ENCODE measurements at regions of chr13 and their contacts with region 1.

Region 1: GRCh38 chr13:102555917-102556553 is 40.8 kb upstream of the TPP2 start:
- DNase-seq: no peak
- ATAC-seq: peak; percentile 78
- H3K4me3 ChIP-seq: no peak overlapping the region
- H3K27ac ChIP-seq: no peak overlapping the region
- H3K4me1 ChIP-seq: no peaks in the 10 kb centered on the region
- H3K27me3 ChIP-seq: no peaks in the 10 kb centered on the region
- CTCF ChIP-seq: peak; percentile 34 to 52 (median 39); a peak in 4 of 6 replicates
- EP300 ChIP-seq: no peak
- POLR2A ChIP-seq: no peak
- RAD21 ChIP-seq: peak; percentile 70

Region 2: DNA sequence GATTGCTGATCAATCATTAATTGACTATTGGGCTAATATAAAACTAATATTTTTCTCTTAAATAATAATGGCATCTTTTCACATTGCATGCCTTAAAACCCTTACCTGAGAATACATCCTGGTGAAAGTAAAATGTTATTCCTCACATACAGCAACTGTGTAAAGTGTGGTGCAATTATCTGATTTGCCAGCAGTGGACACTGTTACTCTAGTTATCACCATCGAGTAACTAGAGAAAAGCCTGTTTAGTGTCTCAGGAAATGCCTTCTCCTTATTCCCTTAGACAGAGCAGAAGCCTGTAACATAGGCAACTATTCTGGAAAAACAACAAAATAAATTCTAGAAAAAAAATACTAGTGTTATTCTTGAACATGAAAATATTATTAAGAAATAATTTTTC is 614.0 kb before region 1 on chr13:
- CTCF ChIA-PET with region 1: interaction called, 14 read pairs
- POLR2A ChIA-PET with region 1: no interaction called
- RAD21 ChIA-PET with region 1: interaction called, 10 read pairs
- SMC1A ChIA-PET with region 1: interaction called, 4 read pairs
- in situ Hi-C with region 1: loop called (anchors 10 kb)
- intact Hi-C with region 1: no loop called
- DNase-seq: no peak
- ATAC-seq: peak; percentile 78
- H3K4me3 ChIP-seq: no peak overlapping the region
- H3K27ac ChIP-seq: no peak overlapping the region
- H3K4me1 ChIP-seq: no peaks in the 10 kb centered on the region
- H3K27me3 ChIP-seq: no peaks in the 10 kb centered on the region
- CTCF ChIP-seq: peak; percentile 62 to 63 (median 63)
- EP300 ChIP-seq: no peak
- POLR2A ChIP-seq: no peak
- RAD21 ChIP-seq: peak; percentile 72

Region 3: GRCh38 chr13:102141625-102142472 is 414.2 kb before region 1 on chr13:
- CTCF ChIA-PET with region 1: interaction called, 12 read pairs
- POLR2A ChIA-PET with region 1: no interaction called
- RAD21 ChIA-PET with region 1: interaction called, 10 read pairs
- SMC1A ChIA-PET with region 1: interaction called, 8 read pairs
- in situ Hi-C with region 1: no loop called
- intact Hi-C with region 1: loop called (anchors 2 kb)
- DNase-seq: no peak
- ATAC-seq: peak; percentile 45; the same call in 2 of the 3 replicates
- H3K4me3 ChIP-seq: no peak overlapping the region
- H3K27ac ChIP-seq: no peak overlapping the region
- H3K4me1 ChIP-seq: no peaks in the 10 kb centered on the region
- H3K27me3 ChIP-seq: no peaks in the 10 kb centered on the region
- CTCF ChIP-seq: peak; percentile 52 to 63 (median 55)
- EP300 ChIP-seq: no peak
- POLR2A ChIP-seq: no peak
- RAD21 ChIP-seq: peak; percentile 39

Region 4: GRCh38 chr13:102197193-102197592 is 358.8 kb before region 1 on chr13:
- CTCF ChIA-PET with region 1: no interaction called
- POLR2A ChIA-PET with region 1: no interaction called
- RAD21 ChIA-PET with region 1: no interaction called
- SMC1A ChIA-PET with region 1: no interaction called
- in situ Hi-C with region 1: no loop called
- intact Hi-C with region 1: loop called (anchors 5 kb)
- DNase-seq: no peak
- ATAC-seq: peak; percentile 52; the same call in 1 of the 3 replicates
- H3K4me3 ChIP-seq: no peak overlapping the region
- H3K27ac ChIP-seq: no peak overlapping the region
- H3K4me1 ChIP-seq: no peaks in the 10 kb centered on the region
- H3K27me3 ChIP-seq: no peaks in the 10 kb centered on the region
- CTCF ChIP-seq: peak in 2 of 3 experiments; percentile 9 to 15; a peak in 1 of 6 replicates
- EP300 ChIP-seq: no peak
- POLR2A ChIP-seq: no peak
- RAD21 ChIP-seq: 0 out of 2 replicates have a peak, but pooled peaks have one; percentile 32

Region 5: GRCh38 chr13:102571075-102571474 is 15.0 kb after region 1 on chr13:
- CTCF ChIA-PET with region 1: interaction called, 11 read pairs
- POLR2A ChIA-PET with region 1: no interaction called
- RAD21 ChIA-PET with region 1: interaction called, 3 read pairs
- SMC1A ChIA-PET with region 1: interaction called, 5 read pairs
- in situ Hi-C with region 1: no loop called
- intact Hi-C with region 1: no loop called
- DNase-seq: no peak
- ATAC-seq: no peak; the same call in 2 of the 3 replicates
- H3K4me3 ChIP-seq: no peak overlapping the region
- H3K27ac ChIP-seq: no peak overlapping the region
- H3K4me1 ChIP-seq: no peaks in the 10 kb centered on the region
- H3K27me3 ChIP-seq: peaks cover 0 to 3% of the 10 kb centered on the region in 2 experiments; a peak in 1 of 4 replicates
- CTCF ChIP-seq: no peak
- EP300 ChIP-seq: no peak
- POLR2A ChIP-seq: no peak
- RAD21 ChIP-seq: no peak